ENCODE measurements at regions of chr13 and their contacts with region 1.

Region 1: GRCh38 chr13:96967248-96967745 is 27.0 kb downstream of the OXGR1 start:
- DNase-seq: peak; percentile 59
- ATAC-seq: peak; percentile 90
- H3K4me3 ChIP-seq: peak overlapping the region; percentile 18 to 47
- H3K27ac ChIP-seq: no peak overlapping the region
- H3K4me1 ChIP-seq: peaks cover 2 to 9% of the 10 kb centered on the region in 2 experiments; a peak in 2 of 4 replicates
- H3K27me3 ChIP-seq: no peaks in the 10 kb centered on the region
- CTCF ChIP-seq: peak; percentile 47 to 55 (median 50); a peak in 5 of 6 replicates
- POLR2A ChIP-seq: no peak
- RAD21 ChIP-seq: peak; percentile 66

Region 2: GRCh38 chr13:95191821-95192563 is 1775.3 kb before region 1 on chr13:
- CTCF ChIA-PET with region 1: interaction called, 15 read pairs
- POLR2A ChIA-PET with region 1: no interaction called
- RAD21 ChIA-PET with region 1: interaction called in 1 of 2 experiments, 3 read pairs
- intact Hi-C with region 1: loop called (anchors 2 kb)
- DNase-seq: peak; percentile 45
- ATAC-seq: peak; percentile 99
- H3K4me3 ChIP-seq: no peak overlapping the region
- H3K27ac ChIP-seq: no peak overlapping the region
- H3K4me1 ChIP-seq: no peaks in the 10 kb centered on the region
- H3K27me3 ChIP-seq: no peaks in the 10 kb centered on the region
- CTCF ChIP-seq: peak; percentile 80 to 97 (median 94)
- POLR2A ChIP-seq: no peak
- RAD21 ChIP-seq: peak; percentile 91

Region 3: GRCh38 chr13:95624020-95624419 is 1343.3 kb before region 1 on chr13:
- CTCF ChIA-PET with region 1: interaction called, 11 read pairs
- POLR2A ChIA-PET with region 1: no interaction called
- RAD21 ChIA-PET with region 1: no interaction called
- intact Hi-C with region 1: loop called (anchors 5 kb)
- DNase-seq: peak; percentile 39
- ATAC-seq: peak; percentile 86
- H3K4me3 ChIP-seq: no peak overlapping the region
- H3K27ac ChIP-seq: no peak overlapping the region
- H3K4me1 ChIP-seq: no peaks in the 10 kb centered on the region
- H3K27me3 ChIP-seq: no peaks in the 10 kb centered on the region
- CTCF ChIP-seq: peak; percentile 59 to 78 (median 65)
- POLR2A ChIP-seq: no peak
- RAD21 ChIP-seq: peak; percentile 79

Region 4: DNA sequence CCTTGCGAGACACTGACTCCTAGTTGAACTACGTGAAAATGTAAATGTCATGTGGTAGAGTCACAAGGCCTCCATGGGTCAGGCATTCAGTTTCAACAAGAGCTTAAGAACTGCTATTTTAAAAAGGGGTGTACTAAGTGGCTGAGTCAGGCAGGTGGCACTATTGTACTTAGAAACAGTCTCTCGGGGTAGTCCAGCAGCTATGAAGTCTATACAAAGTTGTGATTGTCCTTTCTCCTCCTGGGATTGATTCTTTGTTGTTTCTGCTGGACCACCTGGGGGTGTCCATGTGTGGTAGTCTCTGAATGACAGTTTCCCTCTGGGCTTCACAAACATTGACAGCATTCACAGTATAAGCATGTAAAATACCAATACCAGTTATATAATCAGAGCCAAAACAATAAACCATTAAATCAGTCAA is 947.1 kb before region 1 on chr13:
- CTCF ChIA-PET with region 1: interaction called, 33 read pairs
- POLR2A ChIA-PET with region 1: no interaction called
- RAD21 ChIA-PET with region 1: interaction called, 3 to 4 read pairs
- intact Hi-C with region 1: loop called (anchors 2 kb)
- DNase-seq: peak; percentile 56
- ATAC-seq: peak; percentile 95
- H3K4me3 ChIP-seq: no peak overlapping the region
- H3K27ac ChIP-seq: no peak overlapping the region
- H3K4me1 ChIP-seq: no peaks in the 10 kb centered on the region
- H3K27me3 ChIP-seq: no peaks in the 10 kb centered on the region
- CTCF ChIP-seq: peak; percentile 57 to 70 (median 58); a peak in 5 of 6 replicates
- POLR2A ChIP-seq: no peak
- RAD21 ChIP-seq: peak; percentile 78

Region 5: GRCh38 chr13:96817336-96817941 is 149.9 kb before region 1 on chr13:
- CTCF ChIA-PET with region 1: interaction called, 20 read pairs
- POLR2A ChIA-PET with region 1: no interaction called
- RAD21 ChIA-PET with region 1: interaction called in 1 of 2 experiments, 5 read pairs
- intact Hi-C with region 1: no loop called
- DNase-seq: peak; percentile 37
- ATAC-seq: no peak
- H3K4me3 ChIP-seq: no peak overlapping the region
- H3K27ac ChIP-seq: no peak overlapping the region
- H3K4me1 ChIP-seq: no peaks in the 10 kb centered on the region
- H3K27me3 ChIP-seq: no peaks in the 10 kb centered on the region
- CTCF ChIP-seq: peak; percentile 42 to 58 (median 48); a peak in 4 of 6 replicates
- POLR2A ChIP-seq: no peak
- RAD21 ChIP-seq: peak; percentile 61

Region 6: DNA sequence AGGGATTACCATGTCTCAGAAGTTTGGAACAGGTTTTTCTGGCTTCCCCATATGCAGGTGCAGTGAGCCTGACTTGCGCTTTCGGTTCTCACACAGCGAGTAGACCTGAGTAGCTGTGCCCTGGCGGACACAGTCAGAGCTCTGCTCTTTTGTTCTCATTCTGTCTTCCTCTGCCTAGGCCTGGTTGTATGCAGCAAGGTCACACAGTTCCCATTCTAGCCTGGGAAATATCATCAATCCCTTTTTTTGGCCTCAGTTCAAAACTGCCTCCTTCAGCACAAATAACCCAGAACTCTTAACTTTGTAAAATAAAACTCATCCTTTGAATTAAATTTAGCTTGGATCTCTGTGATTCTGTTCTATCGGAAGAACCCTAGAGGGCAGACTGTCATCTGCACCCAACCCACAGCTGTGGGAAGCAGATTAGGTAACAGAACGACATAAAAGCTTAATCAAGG is 16.8 kb after region 1 on chr13:
- CTCF ChIA-PET with region 1: interaction called, 15 read pairs
- POLR2A ChIA-PET with region 1: interaction called, 6 read pairs
- RAD21 ChIA-PET with region 1: interaction called in 1 of 2 experiments, 3 read pairs
- intact Hi-C with region 1: no loop called
- DNase-seq: no peak
- ATAC-seq: peak; percentile 93
- H3K4me3 ChIP-seq: peak overlapping the region; percentile 42 to 55
- H3K27ac ChIP-seq: no peak overlapping the region
- H3K4me1 ChIP-seq: peaks cover 0 to 4% of the 10 kb centered on the region in 2 experiments; a peak in 1 of 4 replicates
- H3K27me3 ChIP-seq: no peaks in the 10 kb centered on the region
- CTCF ChIP-seq: peak; percentile 22 to 47 (median 47); a peak in 5 of 6 replicates
- POLR2A ChIP-seq: no peak
- RAD21 ChIP-seq: peak; percentile 20; the same call in 1 of the 2 replicates

Measured in HCT116 (cell line).